Activated CD4-positive, alpha-beta T cell treated with anti-CD3 and anti-CD28 coated beads, Interleukin-2, amount 10 ng/mL, durations not matched to agents 24 days and 14 days (primary cell): ENCODE measurements at regions of chr7 and their contacts with region 1.

Region 1: GRCh38 chr7:14457568-14458453 is 444.7 kb downstream of the DGKB start:
- DNase-seq: peak; percentile 79
- H3K4me3 Mint-ChIP-seq: no peak overlapping the region
- H3K27ac Mint-ChIP-seq: no peak overlapping the region
- H3K4me1 Mint-ChIP-seq: peaks cover 2% of the 10 kb centered on the region
- H3K27me3 Mint-ChIP-seq: no peaks in the 10 kb centered on the region

Region 2: GRCh38 chr7:12638851-12639467 is 1818.9 kb before region 1 on chr7:
- intact Hi-C with region 1: loop called (anchors 5 kb)
- DNase-seq: no peak
- H3K4me3 Mint-ChIP-seq: no peak overlapping the region
- H3K27ac Mint-ChIP-seq: no peak overlapping the region
- H3K4me1 Mint-ChIP-seq: peaks cover 15% of the 10 kb centered on the region
- H3K27me3 Mint-ChIP-seq: peaks cover 9% of the 10 kb centered on the region

Region 3: GRCh38 chr7:13279854-13280435 is 1177.9 kb before region 1 on chr7:
- intact Hi-C with region 1: loop called (anchors 2 kb)
- DNase-seq: no peak
- H3K4me3 Mint-ChIP-seq: no peak overlapping the region
- H3K27ac Mint-ChIP-seq: no peak overlapping the region
- H3K4me1 Mint-ChIP-seq: no peaks in the 10 kb centered on the region
- H3K27me3 Mint-ChIP-seq: no peaks in the 10 kb centered on the region

Region 4: DNA sequence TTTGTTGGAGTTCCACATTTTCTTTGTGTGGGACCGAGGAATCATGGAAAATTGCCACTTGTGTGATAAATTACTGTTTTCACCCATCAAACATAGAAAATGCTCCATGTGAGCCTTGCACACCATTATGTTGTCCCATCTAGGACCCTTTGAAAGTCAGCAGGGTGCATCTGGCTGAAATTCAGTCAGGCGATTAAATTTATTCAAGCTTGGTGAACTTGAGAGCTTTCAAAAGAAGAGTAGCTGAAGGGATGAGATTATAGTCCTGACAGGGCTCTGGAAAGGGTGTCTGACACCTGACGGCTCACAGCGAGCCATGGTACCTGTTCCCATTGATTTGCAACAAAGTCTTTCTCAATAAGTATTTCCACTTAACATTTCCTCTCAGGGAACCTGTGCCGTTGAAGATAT is 68.6 kb before region 1 on chr7:
- intact Hi-C with region 1: no loop called
- DNase-seq: no peak
- H3K4me3 Mint-ChIP-seq: no peak overlapping the region
- H3K27ac Mint-ChIP-seq: no peak overlapping the region
- H3K4me1 Mint-ChIP-seq: no peaks in the 10 kb centered on the region
- H3K27me3 Mint-ChIP-seq: no peaks in the 10 kb centered on the region